Left colon (tissue), 2 donors: ENCODE measurements at regions of chr4 and their contacts with region 1.

Region 1: GRCh38 chr4:39977489-39978377 is at the start of gene PDS5A:
- DNase-seq: peak; percentile 83 to 88
- ATAC-seq: peak; percentile 85
- total RNA-seq, gene PDS5A: 56.3 to 59.8 TPM

Region 2: GRCh38 chr4:39469429-39470077 is 508.2 kb before region 1 on chr4:
- intact Hi-C with region 1: loop called in 1 of 2 experiments (anchors 10 kb)
- DNase-seq: peak in 1 of 2 donors; percentile 37
- ATAC-seq: peak; percentile 69

Region 3: GRCh38 chr4:39697740-39698423 is 279.9 kb before region 1 on chr4 and contains the start of gene UBE2K:
- intact Hi-C with region 1: loop called in 1 of 2 experiments (anchors 10 kb)
- DNase-seq: peak; percentile 86 to 89
- ATAC-seq: peak; percentile 95
- total RNA-seq, gene UBE2K: 83.5 to 92.1 TPM

Region 4: DNA sequence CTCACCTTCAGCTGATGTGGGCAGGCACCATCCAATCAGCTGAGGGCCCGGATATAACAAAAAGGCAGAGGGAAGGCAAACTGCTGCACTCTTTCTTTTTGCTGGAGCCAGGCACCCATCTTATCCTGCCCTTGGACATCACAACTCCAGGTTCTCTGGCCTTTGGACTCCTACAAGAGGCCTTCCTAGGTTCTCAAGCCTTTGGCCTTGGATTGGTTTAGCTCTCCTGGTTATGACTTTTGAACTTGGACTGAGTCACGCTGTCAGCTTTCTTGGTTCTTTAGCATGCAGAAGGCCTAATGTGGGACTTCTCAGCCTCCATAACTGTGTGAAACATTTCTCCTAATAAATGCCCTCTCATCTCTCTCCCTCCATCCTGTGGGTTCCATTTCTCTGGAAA is 55.9 kb after region 1 on chr4:
- intact Hi-C with region 1: no loop called
- DNase-seq: no peak
- ATAC-seq: no peak